HCT116 (cell line): ENCODE measurements at regions of chr20 and their contacts with region 1.

Region 1: DNA sequence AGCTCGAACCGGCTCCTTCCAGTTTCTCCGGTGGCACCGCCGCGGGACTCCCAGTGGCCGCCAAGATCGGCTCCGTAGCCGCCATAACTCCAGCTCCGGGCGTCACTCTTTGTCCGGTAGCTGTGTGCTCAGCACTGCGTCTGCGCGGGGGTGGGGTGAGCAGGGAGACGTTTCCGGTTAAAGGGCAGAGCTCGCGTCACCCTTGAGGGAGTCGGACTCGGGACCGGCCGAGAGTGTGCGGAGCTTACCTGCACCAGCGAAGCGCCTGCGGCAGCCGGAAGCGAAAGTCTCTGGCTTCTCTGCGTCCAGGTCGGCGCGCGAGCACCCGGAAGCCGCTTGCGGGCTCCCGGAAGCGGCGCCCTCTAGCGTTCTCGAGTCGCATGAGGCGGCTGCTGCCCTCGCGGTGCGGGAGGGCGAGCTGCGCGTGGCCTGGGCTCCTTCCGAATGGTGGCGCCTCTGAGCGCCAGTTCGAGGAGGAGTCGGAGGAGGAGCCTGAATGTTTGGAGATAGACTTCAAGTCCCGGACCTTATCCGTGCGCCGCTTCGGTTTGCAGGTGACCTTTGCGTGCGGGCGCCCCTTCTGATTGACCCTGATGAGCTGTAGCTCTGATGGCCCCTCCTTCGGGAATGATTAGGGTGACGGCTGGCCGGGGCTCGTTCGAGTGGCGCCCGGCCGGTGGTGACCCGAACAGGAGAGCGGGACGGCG is at the start of gene SCAND1:
- DNase-seq: peak; percentile 96
- ATAC-seq: peak; percentile 92
- H3K4me3 ChIP-seq: peak within 1 kb of the TSS; percentile 96
- H3K27ac ChIP-seq: peak within 1 kb of the TSS; percentile 99
- H3K4me1 ChIP-seq: peaks cover 6 to 29% of the 10 kb centered on the region in 2 experiments; a peak in 3 of 4 replicates
- H3K27me3 ChIP-seq: no peaks in the 10 kb centered on the region
- CTCF ChIP-seq: peak; percentile 91 to 99 (median 95)
- POLR2A ChIP-seq: peak; percentile 30
- RAD21 ChIP-seq: peak; percentile 68
- total RNA-seq, gene SCAND1: 46.2 TPM

Region 2: GRCh38 chr20:35561268-35561667 is 393.1 kb before region 1 on chr20:
- CTCF ChIA-PET with region 1: no interaction called
- POLR2A ChIA-PET with region 1: no interaction called
- RAD21 ChIA-PET with region 1: no interaction called
- intact Hi-C with region 1: no loop called
- DNase-seq: no peak
- ATAC-seq: peak; percentile 79
- H3K4me3 ChIP-seq: no peak overlapping the region
- H3K27ac ChIP-seq: no peak overlapping the region
- H3K4me1 ChIP-seq: no peaks in the 10 kb centered on the region; a peak in 1 of 4 replicates
- H3K27me3 ChIP-seq: no peaks in the 10 kb centered on the region
- CTCF ChIP-seq: peak in 2 of 3 experiments; percentile 15 to 34; a peak in 2 of 6 replicates
- POLR2A ChIP-seq: no peak
- RAD21 ChIP-seq: peak; percentile 45; the same call in 1 of the 2 replicates

Region 3: GRCh38 chr20:35942243-35942642 is 12.1 kb before region 1 on chr20:
- CTCF ChIA-PET with region 1: interaction called, 15 read pairs
- POLR2A ChIA-PET with region 1: no interaction called
- RAD21 ChIA-PET with region 1: no interaction called
- intact Hi-C with region 1: no loop called
- DNase-seq: no peak
- ATAC-seq: no peak
- H3K4me3 ChIP-seq: no peak overlapping the region
- H3K27ac ChIP-seq: no peak overlapping the region
- H3K4me1 ChIP-seq: no peaks in the 10 kb centered on the region
- H3K27me3 ChIP-seq: no peaks in the 10 kb centered on the region
- CTCF ChIP-seq: no peak
- POLR2A ChIP-seq: no peak
- RAD21 ChIP-seq: no peak

Region 4: GRCh38 chr20:35968931-35969330 is 14.6 kb after region 1 on chr20:
- CTCF ChIA-PET with region 1: interaction called, 13 read pairs
- POLR2A ChIA-PET with region 1: interaction called, 8 read pairs
- RAD21 ChIA-PET with region 1: no interaction called
- intact Hi-C with region 1: no loop called
- DNase-seq: no peak
- ATAC-seq: peak; percentile 52; the same call in 1 of the 2 replicates
- H3K4me3 ChIP-seq: no peak overlapping the region
- H3K27ac ChIP-seq: no peak overlapping the region
- H3K4me1 ChIP-seq: peaks cover 0 to 8% of the 10 kb centered on the region in 2 experiments; a peak in 2 of 4 replicates
- H3K27me3 ChIP-seq: no peaks in the 10 kb centered on the region
- CTCF ChIP-seq: no peak
- POLR2A ChIP-seq: no peak
- RAD21 ChIP-seq: no peak